ENCODE measurements at regions of chr7 and their contacts with region 1.

Region 1: GRCh38 chr7:135281363-135281949 is 47.8 kb downstream of the STRA8 start:
- DNase-seq: peak; percentile 51 to 89 (median 78)
- ATAC-seq: peak; percentile 100
- H3K4me3 ChIP-seq: no peak overlapping the region
- H3K4me3 Mint-ChIP-seq: no peak overlapping the region
- H3K27ac ChIP-seq: no peak overlapping the region
- H3K27ac Mint-ChIP-seq: no peak overlapping the region
- H3K4me1 ChIP-seq: no peaks in the 10 kb centered on the region
- H3K4me1 Mint-ChIP-seq: peaks cover 12% of the 10 kb centered on the region
- H3K27me3 ChIP-seq: no peaks in the 10 kb centered on the region
- H3K27me3 Mint-ChIP-seq: peaks cover 4% of the 10 kb centered on the region
- CTCF ChIP-seq: peak; percentile 98

Region 2: GRCh38 chr7:135335628-135336139 is 54.2 kb after region 1 on chr7:
- CTCF ChIA-PET with region 1: interaction called, 23 read pairs
- POLR2A ChIA-PET with region 1: no interaction called
- intact Hi-C with region 1: loop called in 1 of 2 experiments (anchors 1 kb)
- DNase-seq: peak in 6 of 9 experiments; percentile 3 to 42 (median 29)
- ATAC-seq: no peak
- H3K4me3 ChIP-seq: no peak overlapping the region
- H3K4me3 Mint-ChIP-seq: no peak overlapping the region
- H3K27ac ChIP-seq: no peak overlapping the region
- H3K27ac Mint-ChIP-seq: no peak overlapping the region
- H3K4me1 ChIP-seq: no peaks in the 10 kb centered on the region
- H3K4me1 Mint-ChIP-seq: no peaks in the 10 kb centered on the region
- H3K27me3 ChIP-seq: no peaks in the 10 kb centered on the region
- H3K27me3 Mint-ChIP-seq: peaks cover 3% of the 10 kb centered on the region
- CTCF ChIP-seq: no peak

Region 3: GRCh38 chr7:135420786-135421185 is 139.3 kb after region 1 on chr7:
- CTCF ChIA-PET with region 1: no interaction called
- POLR2A ChIA-PET with region 1: no interaction called
- intact Hi-C with region 1: no loop called
- DNase-seq: no peak
- ATAC-seq: no peak
- H3K4me3 ChIP-seq: no peak overlapping the region
- H3K4me3 Mint-ChIP-seq: no peak overlapping the region
- H3K27ac ChIP-seq: no peak overlapping the region
- H3K27ac Mint-ChIP-seq: no peak overlapping the region
- H3K4me1 ChIP-seq: no peaks in the 10 kb centered on the region
- H3K4me1 Mint-ChIP-seq: peaks cover 31% of the 10 kb centered on the region
- H3K27me3 ChIP-seq: no peaks in the 10 kb centered on the region
- H3K27me3 Mint-ChIP-seq: no peaks in the 10 kb centered on the region
- CTCF ChIP-seq: no peak

Region 4: GRCh38 chr7:135447783-135448182 is 166.3 kb after region 1 on chr7:
- CTCF ChIA-PET with region 1: no interaction called
- POLR2A ChIA-PET with region 1: no interaction called
- intact Hi-C with region 1: loop called in 1 of 2 experiments (anchors 1 kb)
- DNase-seq: no peak
- ATAC-seq: no peak
- H3K4me3 ChIP-seq: no peak overlapping the region
- H3K4me3 Mint-ChIP-seq: no peak overlapping the region
- H3K27ac ChIP-seq: no peak overlapping the region
- H3K27ac Mint-ChIP-seq: peak overlapping the region; percentile 55
- H3K4me1 ChIP-seq: peaks cover 4% of the 10 kb centered on the region
- H3K4me1 Mint-ChIP-seq: peaks cover 67% of the 10 kb centered on the region
- H3K27me3 ChIP-seq: no peaks in the 10 kb centered on the region
- H3K27me3 Mint-ChIP-seq: no peaks in the 10 kb centered on the region
- CTCF ChIP-seq: no peak

Region 5: DNA sequence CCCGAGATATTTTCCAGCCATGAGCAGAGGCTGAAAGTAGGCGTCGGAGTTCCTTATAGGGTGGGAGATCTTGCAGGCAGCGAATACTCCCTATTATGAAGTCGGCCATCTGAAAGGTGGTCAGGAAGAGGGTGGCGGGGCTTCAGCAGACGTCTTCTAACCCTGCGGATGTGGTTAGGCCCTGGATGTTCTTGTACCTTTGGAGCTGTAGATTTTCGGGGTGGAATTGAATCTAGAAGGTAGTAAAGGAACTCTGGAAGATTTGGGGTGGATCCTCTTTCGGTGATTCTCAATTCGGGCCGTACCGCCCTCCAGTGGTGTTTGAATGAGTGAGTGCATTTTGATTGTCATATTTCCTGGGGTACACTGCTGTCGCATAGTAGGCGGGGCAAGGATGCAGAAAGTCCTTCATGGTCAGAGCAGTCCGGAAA is 276.9 kb after region 1 on chr7:
- CTCF ChIA-PET with region 1: interaction called, 6 read pairs
- POLR2A ChIA-PET with region 1: no interaction called
- intact Hi-C with region 1: loop called (anchors 1 kb)
- DNase-seq: peak; percentile 37 to 87 (median 68)
- ATAC-seq: peak; percentile 52
- H3K4me3 ChIP-seq: peak overlapping the region; percentile 85 to 86
- H3K4me3 Mint-ChIP-seq: no peak overlapping the region
- H3K27ac ChIP-seq: peak overlapping the region; percentile 90 to 98
- H3K27ac Mint-ChIP-seq: no peak overlapping the region
- H3K4me1 ChIP-seq: peaks cover 16% of the 10 kb centered on the region
- H3K4me1 Mint-ChIP-seq: peaks cover 17% of the 10 kb centered on the region
- H3K27me3 ChIP-seq: no peaks in the 10 kb centered on the region
- H3K27me3 Mint-ChIP-seq: no peaks in the 10 kb centered on the region
- CTCF ChIP-seq: peak; percentile 52

Region 6: DNA sequence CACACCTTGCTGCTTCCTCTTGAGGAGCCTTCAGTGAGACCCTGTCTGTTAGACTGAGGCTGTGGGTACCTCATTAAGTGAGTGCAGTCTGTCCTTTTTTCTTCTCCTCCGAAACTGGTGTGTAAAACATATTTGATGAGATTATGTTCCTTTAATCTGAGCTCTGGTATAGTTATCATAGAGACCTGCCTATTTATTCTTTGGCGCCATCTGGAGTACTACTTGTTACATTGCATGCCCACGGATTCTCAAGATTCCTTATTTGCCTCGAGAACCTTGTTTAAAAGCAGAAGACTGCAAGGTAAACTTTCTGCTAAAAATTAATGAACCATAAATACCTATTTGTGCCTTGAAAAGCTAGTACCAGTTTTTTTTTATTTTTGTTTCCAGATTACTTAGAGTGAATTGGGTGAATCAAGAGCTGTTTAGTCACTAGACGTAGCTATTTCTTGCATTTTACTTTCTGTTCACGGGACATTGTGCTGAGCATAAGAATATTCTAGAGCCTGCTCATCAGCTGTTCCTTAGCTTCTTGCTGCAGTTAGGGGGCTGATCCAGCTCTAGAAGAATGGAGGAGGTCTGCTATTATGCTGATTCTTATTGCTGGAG is 363.9 kb after region 1 on chr7:
- CTCF ChIA-PET with region 1: interaction called, 54 read pairs
- POLR2A ChIA-PET with region 1: no interaction called
- intact Hi-C with region 1: loop called (anchors 1 kb)
- DNase-seq: peak in 3 of 9 experiments; percentile 21 to 59 (median 52)
- ATAC-seq: peak; percentile 83
- H3K4me3 ChIP-seq: no peak overlapping the region
- H3K4me3 Mint-ChIP-seq: no peak overlapping the region
- H3K27ac ChIP-seq: no peak overlapping the region
- H3K27ac Mint-ChIP-seq: no peak overlapping the region
- H3K4me1 ChIP-seq: no peaks in the 10 kb centered on the region
- H3K4me1 Mint-ChIP-seq: no peaks in the 10 kb centered on the region
- H3K27me3 ChIP-seq: no peaks in the 10 kb centered on the region
- H3K27me3 Mint-ChIP-seq: no peaks in the 10 kb centered on the region
- CTCF ChIP-seq: peak; percentile 79

Region 7: GRCh38 chr7:137169282-137169698 is 1887.8 kb after region 1 on chr7:
- CTCF ChIA-PET with region 1: no interaction called
- POLR2A ChIA-PET with region 1: no interaction called
- intact Hi-C with region 1: no loop called
- DNase-seq: no peak
- ATAC-seq: no peak
- H3K4me3 ChIP-seq: no peak overlapping the region
- H3K4me3 Mint-ChIP-seq: no peak overlapping the region
- H3K27ac ChIP-seq: no peak overlapping the region
- H3K27ac Mint-ChIP-seq: no peak overlapping the region
- H3K4me1 ChIP-seq: no peaks in the 10 kb centered on the region
- H3K4me1 Mint-ChIP-seq: no peaks in the 10 kb centered on the region
- H3K27me3 ChIP-seq: no peaks in the 10 kb centered on the region
- H3K27me3 Mint-ChIP-seq: no peaks in the 10 kb centered on the region
- CTCF ChIP-seq: no peak

Measured in CD8-positive, alpha-beta T cell (primary cell).